ENCODE measurements at regions of chr2 and their contacts with region 1.

Region 1: GRCh38 chr2:162118559-162119031 is 33.5 kb downstream of the GCG start:
- DNase-seq: no peak

Region 2: GRCh38 chr2:162029287-162029901 is 89.2 kb before region 1 on chr2:
- intact Hi-C with region 1: loop called (anchors 5 kb)
- DNase-seq: no peak